Activated CD4-positive, alpha-beta memory T cell treated with anti-CD3 and anti-CD28 coated beads, Interleukin-2, amount 10 ng/mL, durations not matched to agents 7 days and 5 days (primary cell): ENCODE measurements at regions of chr7 and their contacts with region 1.

Region 1: DNA sequence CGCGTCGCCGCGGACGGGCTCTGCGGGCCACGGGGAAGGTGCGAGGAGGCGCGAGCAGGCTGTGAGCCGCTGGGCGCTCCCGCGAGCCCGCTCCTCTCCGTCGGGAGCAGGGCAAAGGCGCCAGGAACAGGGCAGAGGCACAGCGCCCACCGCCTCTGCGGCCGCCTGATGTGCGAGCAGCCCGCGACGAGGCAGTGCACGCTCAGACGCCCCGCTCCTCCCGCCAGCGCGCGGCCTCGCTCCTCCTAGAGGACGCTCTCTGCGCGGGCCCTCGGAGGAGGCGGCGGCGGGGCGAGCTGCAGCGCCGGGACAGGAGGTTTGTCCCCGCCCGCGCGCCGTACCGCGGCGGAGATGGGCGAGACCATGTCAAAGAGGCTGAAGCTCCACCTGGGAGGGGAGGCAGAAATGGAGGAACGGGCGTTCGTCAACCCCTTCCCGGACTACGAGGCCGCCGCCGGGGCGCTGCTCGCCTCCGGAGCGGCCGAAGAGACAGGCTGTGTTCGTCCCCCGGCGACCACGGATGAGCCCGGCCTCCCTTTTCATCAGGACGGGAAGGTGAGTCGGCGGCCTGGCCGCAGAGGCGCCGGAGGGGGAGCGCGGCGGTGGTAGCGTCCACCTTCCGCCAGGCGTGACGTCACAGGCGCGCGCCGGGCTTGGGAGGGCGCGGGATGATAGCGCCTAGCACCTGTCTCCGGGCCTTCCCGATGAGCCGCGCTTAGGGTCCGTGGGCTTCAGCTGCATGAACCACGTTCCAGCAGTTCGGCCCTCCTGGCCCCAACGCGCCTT is 731 bp downstream of the LANCL2 start:
- DNase-seq: peak; percentile 95
- H3K4me3 Mint-ChIP-seq: peak overlapping the region; percentile 86
- H3K27ac Mint-ChIP-seq: peak overlapping the region; percentile 93
- H3K4me1 Mint-ChIP-seq: peaks cover 27% of the 10 kb centered on the region
- H3K27me3 Mint-ChIP-seq: peaks cover 6% of the 10 kb centered on the region

Region 2: GRCh38 chr7:54758702-54759592 is 606.9 kb before region 1 on chr7 and contains the start of gene SEC61G:
- CTCF ChIA-PET with region 1: interaction called, 3 read pairs
- POLR2A ChIA-PET with region 1: interaction called, 29 read pairs
- DNase-seq: peak; percentile 96
- H3K4me3 Mint-ChIP-seq: peak within 1 kb of the TSS; percentile 100
- H3K27ac Mint-ChIP-seq: peak within 1 kb of the TSS; percentile 96
- H3K4me1 Mint-ChIP-seq: peaks cover 37% of the 10 kb centered on the region
- H3K27me3 Mint-ChIP-seq: peaks cover 7% of the 10 kb centered on the region
- total RNA-seq, gene SEC61G: 159 to 170 TPM

Region 3: GRCh38 chr7:55120481-55121198 is 245.2 kb before region 1 on chr7:
- CTCF ChIA-PET with region 1: no interaction called
- POLR2A ChIA-PET with region 1: no interaction called
- DNase-seq: no peak
- H3K4me3 Mint-ChIP-seq: no peak overlapping the region
- H3K27ac Mint-ChIP-seq: no peak overlapping the region
- H3K4me1 Mint-ChIP-seq: no peaks in the 10 kb centered on the region
- H3K27me3 Mint-ChIP-seq: peaks cover 9% of the 10 kb centered on the region

Region 4: GRCh38 chr7:55309040-55309991 is 56.6 kb before region 1 on chr7:
- CTCF ChIA-PET with region 1: interaction called, 15 read pairs
- POLR2A ChIA-PET with region 1: interaction called, 26 read pairs
- DNase-seq: peak; percentile 88
- H3K4me3 Mint-ChIP-seq: peak overlapping the region; percentile 19
- H3K27ac Mint-ChIP-seq: peak overlapping the region; percentile 66
- H3K4me1 Mint-ChIP-seq: peaks cover 49% of the 10 kb centered on the region
- H3K27me3 Mint-ChIP-seq: peaks cover 57% of the 10 kb centered on the region

Region 5: GRCh38 chr7:55423277-55423711 is 57.4 kb after region 1 on chr7:
- CTCF ChIA-PET with region 1: no interaction called
- POLR2A ChIA-PET with region 1: no interaction called
- DNase-seq: no peak
- H3K4me3 Mint-ChIP-seq: no peak overlapping the region
- H3K27ac Mint-ChIP-seq: no peak overlapping the region
- H3K4me1 Mint-ChIP-seq: peaks cover 6% of the 10 kb centered on the region
- H3K27me3 Mint-ChIP-seq: no peaks in the 10 kb centered on the region

Region 6: DNA sequence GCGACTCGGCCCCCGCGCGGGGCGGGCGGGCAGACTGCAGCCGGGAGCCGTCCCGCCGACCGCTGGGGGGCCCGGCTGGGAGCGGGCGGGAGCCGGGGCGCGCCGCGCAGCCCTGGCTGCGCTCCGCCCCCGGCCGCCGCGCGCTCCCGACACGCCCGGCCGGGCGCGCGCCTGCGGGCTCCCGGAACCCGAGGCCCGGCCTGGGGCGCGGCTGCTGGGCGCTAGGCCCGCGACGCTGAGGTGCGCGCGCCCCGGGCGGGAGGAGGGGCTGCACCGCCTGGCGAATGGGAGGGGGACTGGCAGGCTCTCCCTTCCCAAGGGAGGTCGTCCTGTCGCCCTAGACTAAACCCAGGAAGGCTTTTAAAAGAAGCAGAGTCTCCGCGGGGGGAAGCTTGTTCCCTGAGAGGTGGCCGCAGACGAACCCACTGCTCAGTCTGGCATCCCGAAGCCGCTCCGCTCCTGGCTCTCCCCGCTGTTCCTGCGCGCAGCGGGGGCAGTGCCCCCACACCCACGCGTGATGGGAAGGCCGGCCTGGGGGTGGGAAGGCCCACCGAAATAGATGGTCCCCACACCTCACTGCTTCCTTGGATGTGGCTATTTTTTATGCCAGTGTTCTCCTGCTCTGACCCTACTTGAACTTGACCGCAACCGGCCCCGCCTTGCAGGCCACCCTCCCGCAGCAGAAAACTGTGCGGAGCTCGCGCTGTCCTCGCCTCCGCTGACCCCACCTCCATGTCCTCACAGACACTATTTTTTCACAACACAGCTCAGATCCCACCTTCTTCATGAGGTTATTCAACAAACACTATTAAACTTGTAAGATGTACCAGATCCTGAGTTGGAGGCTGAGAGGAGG is 206.7 kb after region 1 on chr7 and contains the start of gene VOPP1:
- CTCF ChIA-PET with region 1: interaction called, 3 read pairs
- POLR2A ChIA-PET with region 1: interaction called, 15 read pairs
- DNase-seq: peak; percentile 59
- H3K4me3 Mint-ChIP-seq: peak within 1 kb of the TSS; percentile 86
- H3K27ac Mint-ChIP-seq: peak within 1 kb of the TSS; percentile 79
- H3K4me1 Mint-ChIP-seq: peaks cover 68% of the 10 kb centered on the region
- H3K27me3 Mint-ChIP-seq: no peaks in the 10 kb centered on the region
- total RNA-seq, gene VOPP1: 51.4 to 52.7 TPM

Region 7: DNA sequence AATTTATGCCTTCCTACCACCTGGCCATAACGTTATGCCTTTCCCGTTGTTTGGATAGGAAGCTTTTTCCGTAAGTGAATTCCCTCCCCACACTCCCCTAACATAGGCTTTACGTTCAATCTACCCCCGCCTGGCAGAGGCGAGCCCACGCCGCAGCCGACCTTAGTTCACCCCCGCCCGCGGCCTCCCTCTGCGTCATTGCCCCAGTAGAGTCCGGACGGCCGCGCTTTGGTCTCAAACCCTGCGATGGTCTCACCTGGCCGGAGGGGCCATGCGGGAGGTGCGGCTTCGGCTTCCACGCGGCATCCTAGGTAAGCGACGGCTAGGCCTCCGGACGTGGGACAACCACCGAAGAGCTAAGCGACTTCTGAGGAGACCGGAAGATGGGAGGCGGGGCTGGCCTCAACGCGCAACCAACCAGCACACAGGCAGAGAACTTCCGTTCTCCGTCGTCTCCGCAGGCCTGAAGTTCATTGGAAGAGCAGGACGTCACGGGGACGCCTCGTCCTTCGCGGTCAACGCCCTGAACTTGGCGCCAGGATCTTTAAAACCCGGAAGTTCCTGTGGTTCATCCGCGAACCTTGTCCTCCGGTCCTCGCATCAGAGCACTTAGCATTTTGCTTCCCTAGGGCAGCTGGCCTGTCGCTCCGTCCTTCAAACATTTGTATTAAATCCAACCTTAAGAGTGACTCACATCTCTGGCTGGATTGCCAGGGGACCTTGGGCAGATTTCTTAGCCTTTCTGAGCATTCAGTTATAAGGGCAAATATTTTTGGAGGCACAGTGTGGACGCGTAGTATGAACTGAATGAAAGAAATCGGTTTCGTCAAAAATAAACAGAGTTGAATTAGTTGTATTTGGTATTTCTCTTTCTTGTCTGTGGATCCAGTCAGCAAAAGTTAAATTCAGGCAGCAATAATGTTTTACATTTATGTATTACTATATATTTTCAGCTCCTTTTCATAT is 740.5 kb after region 1 on chr7 and contains the start of gene CHCHD2:
- CTCF ChIA-PET with region 1: no interaction called
- POLR2A ChIA-PET with region 1: interaction called, 13 read pairs
- DNase-seq: peak; percentile 96
- H3K4me3 Mint-ChIP-seq: peak within 1 kb of the TSS; percentile 99
- H3K27ac Mint-ChIP-seq: peak within 1 kb of the TSS; percentile 94
- H3K4me1 Mint-ChIP-seq: peaks cover 44% of the 10 kb centered on the region
- H3K27me3 Mint-ChIP-seq: no peaks in the 10 kb centered on the region
- total RNA-seq, gene CHCHD2: 482 to 505 TPM